CD8-positive, alpha-beta T cell (primary cell): ENCODE measurements at regions of chr20 and their contacts with region 1.

Region 1: GRCh38 chr20:44388466-44389023 is 33.0 kb downstream of the HNF4A start:
- DNase-seq: peak; percentile 13 to 77 (median 63)
- ATAC-seq: peak; percentile 88
- H3K4me3 ChIP-seq: no peak overlapping the region
- H3K4me3 Mint-ChIP-seq: no peak overlapping the region
- H3K27ac ChIP-seq: no peak overlapping the region
- H3K27ac Mint-ChIP-seq: no peak overlapping the region
- H3K4me1 ChIP-seq: no peaks in the 10 kb centered on the region
- H3K4me1 Mint-ChIP-seq: peaks cover 10% of the 10 kb centered on the region
- H3K27me3 ChIP-seq: no peaks in the 10 kb centered on the region
- H3K27me3 Mint-ChIP-seq: peaks cover 14% of the 10 kb centered on the region
- CTCF ChIP-seq: peak; percentile 68

Region 2: GRCh38 chr20:44460795-44461141 is 72.2 kb after region 1 on chr20:
- CTCF ChIA-PET with region 1: interaction called, 5 read pairs
- POLR2A ChIA-PET with region 1: no interaction called
- intact Hi-C with region 1: loop called in 1 of 2 experiments (anchors 5 kb)
- DNase-seq: peak in 2 of 9 experiments; percentile 24 to 36
- ATAC-seq: no peak
- H3K4me3 ChIP-seq: no peak overlapping the region
- H3K4me3 Mint-ChIP-seq: no peak overlapping the region
- H3K27ac ChIP-seq: no peak overlapping the region
- H3K27ac Mint-ChIP-seq: no peak overlapping the region
- H3K4me1 ChIP-seq: no peaks in the 10 kb centered on the region
- H3K4me1 Mint-ChIP-seq: no peaks in the 10 kb centered on the region
- H3K27me3 ChIP-seq: no peaks in the 10 kb centered on the region
- H3K27me3 Mint-ChIP-seq: no peaks in the 10 kb centered on the region
- CTCF ChIP-seq: peak; percentile 41

Region 3: GRCh38 chr20:44733341-44734069 is 345.0 kb after region 1 on chr20:
- CTCF ChIA-PET with region 1: interaction called, 8 read pairs
- POLR2A ChIA-PET with region 1: no interaction called
- intact Hi-C with region 1: loop called (anchors 1 kb)
- DNase-seq: peak; percentile 29 to 78 (median 56)
- ATAC-seq: peak; percentile 85
- H3K4me3 ChIP-seq: no peak overlapping the region
- H3K4me3 Mint-ChIP-seq: no peak overlapping the region
- H3K27ac ChIP-seq: no peak overlapping the region
- H3K27ac Mint-ChIP-seq: no peak overlapping the region
- H3K4me1 ChIP-seq: peaks cover 7% of the 10 kb centered on the region
- H3K4me1 Mint-ChIP-seq: peaks cover 14% of the 10 kb centered on the region
- H3K27me3 ChIP-seq: no peaks in the 10 kb centered on the region
- H3K27me3 Mint-ChIP-seq: no peaks in the 10 kb centered on the region
- CTCF ChIP-seq: peak; percentile 71

Region 4: GRCh38 chr20:44866703-44867335 is 478.3 kb after region 1 on chr20:
- CTCF ChIA-PET with region 1: interaction called, 3 read pairs
- POLR2A ChIA-PET with region 1: no interaction called
- intact Hi-C with region 1: loop called (anchors 1 to 2 kb)
- DNase-seq: no peak
- ATAC-seq: no peak
- H3K4me3 ChIP-seq: no peak overlapping the region
- H3K4me3 Mint-ChIP-seq: peak overlapping the region; percentile 65
- H3K27ac ChIP-seq: no peak overlapping the region
- H3K27ac Mint-ChIP-seq: no peak overlapping the region
- H3K4me1 ChIP-seq: peaks cover 7% of the 10 kb centered on the region
- H3K4me1 Mint-ChIP-seq: peaks cover 15% of the 10 kb centered on the region
- H3K27me3 ChIP-seq: no peaks in the 10 kb centered on the region
- H3K27me3 Mint-ChIP-seq: peaks cover 6% of the 10 kb centered on the region
- CTCF ChIP-seq: no peak